ENCODE measurements at regions of chr3 and their contacts with region 1.

Region 1: GRCh38 chr3:179322286-179323196 is at the start of gene ZNF639:
- DNase-seq: peak; percentile 87
- ATAC-seq: peak; percentile 83
- H3K4me3 Mint-ChIP-seq: peak within 1 kb of the TSS; percentile 88
- H3K27ac Mint-ChIP-seq: peak within 1 kb of the TSS; percentile 92
- H3K4me1 Mint-ChIP-seq: peaks cover 36% of the 10 kb centered on the region
- H3K27me3 Mint-ChIP-seq: peaks cover 12% of the 10 kb centered on the region
- total RNA-seq, gene ZNF639: 30.1 to 32.2 TPM

Region 2: GRCh38 chr3:179147873-179148615 is 174.5 kb before region 1 on chr3 and contains the start of gene PIK3CA:
- CTCF ChIA-PET with region 1: interaction called, 16 read pairs
- DNase-seq: peak; percentile 98
- ATAC-seq: peak; percentile 86
- H3K4me3 Mint-ChIP-seq: no peak within 1 kb of the TSS
- H3K27ac Mint-ChIP-seq: peak within 1 kb of the TSS; percentile 93
- H3K4me1 Mint-ChIP-seq: peaks cover 29% of the 10 kb centered on the region
- H3K27me3 Mint-ChIP-seq: peaks cover 24% of the 10 kb centered on the region
- total RNA-seq, gene PIK3CA: 18.5 to 19.7 TPM

Measured in activated CD8-positive, alpha-beta memory T cell treated with anti-CD3 and anti-CD28 coated beads, Interleukin-2, amount 10 ng/mL, durations not matched to agents 7 days and 5 days (primary cell).